Colonic mucosa (tissue), 4 donors: ENCODE measurements at regions of chr19 and their contacts with region 1.

Region 1: DNA sequence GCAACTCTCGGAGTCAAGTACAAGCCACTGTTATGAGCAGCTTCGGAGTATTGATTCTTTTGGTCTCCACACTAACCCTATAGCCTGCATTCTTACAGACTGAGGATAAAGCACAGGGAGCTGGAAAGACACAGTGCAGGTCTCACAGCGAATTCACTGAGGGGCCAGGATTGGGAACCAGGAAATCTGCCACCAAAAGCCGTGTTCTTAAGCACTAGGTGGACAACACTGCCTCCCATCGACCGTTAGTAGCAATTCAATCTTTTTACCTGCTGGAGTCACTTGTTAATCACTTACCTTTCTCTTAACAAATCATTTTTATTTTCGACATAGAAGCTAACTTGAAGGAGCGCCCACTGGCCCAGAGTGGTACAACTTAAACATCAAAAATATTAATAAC is 6.3 kb downstream of the PMIS2 start:
- DNase-seq: no peak
- H3K4me3 ChIP-seq: no peak overlapping the region
- H3K27ac ChIP-seq: no peak overlapping the region
- H3K4me1 ChIP-seq: no peaks in the 10 kb centered on the region
- H3K27me3 ChIP-seq: no peaks in the 10 kb centered on the region
- CTCF ChIP-seq: peak; percentile 43

Region 2: GRCh38 chr19:35509861-35510625 is 82.2 kb before region 1 on chr19:
- intact Hi-C with region 1: loop called (anchors 2 kb)
- DNase-seq: peak; percentile 84
- H3K4me3 ChIP-seq: peak overlapping the region; percentile 43
- H3K27ac ChIP-seq: peak overlapping the region; percentile 33
- H3K4me1 ChIP-seq: no peaks in the 10 kb centered on the region
- H3K27me3 ChIP-seq: no peaks in the 10 kb centered on the region
- CTCF ChIP-seq: peak; percentile 93